Activated CD4-positive, alpha-beta T cell treated with anti-CD3 and anti-CD28 coated beads, Interleukin-2, amount 10 ng/mL, durations not matched to agents 7 days and 5 days (primary cell): ENCODE measurements at regions of chr22 and their contacts with region 1.

Region 1: GRCh38 chr22:37817705-37818408 is 5.3 kb upstream of the GALR3 start:
- DNase-seq: peak; percentile 78
- H3K4me3 Mint-ChIP-seq: no peak overlapping the region
- H3K27ac Mint-ChIP-seq: no peak overlapping the region
- H3K4me1 Mint-ChIP-seq: peaks cover 17% of the 10 kb centered on the region
- H3K27me3 Mint-ChIP-seq: peaks cover 31% of the 10 kb centered on the region

Region 2: DNA sequence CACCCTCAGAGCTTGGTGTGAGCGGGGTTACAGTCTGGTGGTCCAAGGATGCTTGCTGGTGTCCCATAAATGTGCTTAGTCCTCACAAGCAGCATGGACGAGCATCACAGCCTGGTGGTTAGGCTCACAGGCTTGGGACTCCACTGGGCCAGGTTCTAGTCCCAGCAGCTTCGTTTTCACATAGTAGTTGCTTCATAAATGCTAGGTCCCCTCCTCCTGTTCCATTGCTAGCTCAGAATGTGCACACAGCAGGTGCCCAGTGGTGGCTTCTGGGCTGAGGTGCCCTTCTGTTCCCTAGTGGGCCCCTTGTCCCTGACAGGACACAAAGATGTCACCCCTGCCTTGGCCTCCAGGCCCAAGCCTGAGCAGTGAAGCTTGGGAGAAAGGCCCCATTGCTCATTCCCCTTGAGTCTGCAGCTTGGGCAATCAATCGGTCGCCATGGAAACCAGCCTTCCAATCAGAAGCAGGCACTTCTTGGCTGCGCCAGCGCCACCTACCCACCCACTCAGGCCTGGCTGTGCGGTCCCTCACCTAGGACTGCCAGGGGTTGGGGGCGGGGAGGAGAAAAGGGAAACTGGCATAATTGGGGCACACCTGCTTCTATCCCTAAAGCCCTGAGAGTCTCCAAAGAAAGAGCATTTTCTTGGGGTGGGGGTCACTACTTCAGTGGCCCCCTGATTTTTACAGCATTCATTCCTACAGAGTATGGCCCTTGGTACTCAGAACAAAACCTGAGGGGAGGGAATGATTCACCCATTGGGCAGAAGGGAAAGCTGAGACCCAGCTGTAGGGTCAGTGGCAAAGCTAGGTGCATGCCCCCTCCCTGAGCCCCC is 487.4 kb before region 1 on chr22:
- CTCF ChIA-PET with region 1: no interaction called
- POLR2A ChIA-PET with region 1: no interaction called
- DNase-seq: peak; percentile 50
- H3K4me3 Mint-ChIP-seq: no peak overlapping the region
- H3K27ac Mint-ChIP-seq: no peak overlapping the region
- H3K4me1 Mint-ChIP-seq: peaks cover 2% of the 10 kb centered on the region
- H3K27me3 Mint-ChIP-seq: peaks cover 65% of the 10 kb centered on the region

Region 3: DNA sequence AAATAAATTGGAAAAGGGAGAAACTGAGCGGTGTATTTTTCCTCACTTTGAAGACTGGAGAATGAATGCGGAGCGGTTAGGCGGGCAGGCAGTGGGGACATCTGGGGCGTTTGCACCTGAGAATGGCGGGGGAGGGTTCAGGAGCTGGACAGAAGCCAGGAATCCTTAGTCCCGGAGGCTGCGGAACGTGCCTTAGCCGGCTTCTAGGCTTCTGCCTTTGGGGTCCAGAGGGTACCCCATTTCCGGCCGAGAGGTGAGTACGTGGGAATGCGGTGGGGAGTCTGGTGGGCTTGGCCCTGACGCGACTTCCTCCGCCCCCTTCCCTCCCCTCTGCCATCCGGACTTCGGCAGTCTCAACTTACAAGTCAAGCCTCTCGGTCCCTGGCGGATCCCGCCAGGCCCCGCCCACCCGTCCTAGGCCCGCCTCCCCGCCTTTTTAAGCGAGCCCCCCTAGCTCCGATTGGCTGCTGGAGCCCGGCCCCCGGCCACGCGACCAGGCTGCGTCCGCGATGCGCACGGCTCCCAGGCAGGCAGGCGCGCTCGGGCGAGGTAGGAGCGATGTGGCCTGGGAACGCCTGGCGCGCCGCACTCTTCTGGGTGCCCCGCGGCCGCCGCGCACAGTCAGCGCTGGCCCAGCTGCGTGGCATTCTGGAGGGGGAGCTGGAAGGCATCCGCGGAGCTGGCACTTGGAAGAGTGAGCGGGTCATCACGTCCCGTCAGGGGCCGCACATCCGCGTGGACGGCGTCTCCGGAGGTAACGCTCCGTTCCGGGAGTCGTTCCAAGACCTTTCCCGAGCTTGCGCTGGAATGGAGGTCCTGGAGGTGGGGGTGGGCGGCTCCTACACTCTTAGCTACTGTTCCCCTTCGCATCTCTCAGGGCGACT is 10.2 kb before region 1 on chr22 and contains the start of gene GCAT:
- CTCF ChIA-PET with region 1: interaction called, 59 read pairs
- POLR2A ChIA-PET with region 1: no interaction called
- DNase-seq: peak; percentile 93
- H3K4me3 Mint-ChIP-seq: peak within 1 kb of the TSS; percentile 75
- H3K27ac Mint-ChIP-seq: peak within 1 kb of the TSS; percentile 19
- H3K4me1 Mint-ChIP-seq: peaks cover 45% of the 10 kb centered on the region
- H3K27me3 Mint-ChIP-seq: peaks cover 40% of the 10 kb centered on the region
- total RNA-seq, gene GCAT: 10.4 to 12.0 TPM

Region 4: DNA sequence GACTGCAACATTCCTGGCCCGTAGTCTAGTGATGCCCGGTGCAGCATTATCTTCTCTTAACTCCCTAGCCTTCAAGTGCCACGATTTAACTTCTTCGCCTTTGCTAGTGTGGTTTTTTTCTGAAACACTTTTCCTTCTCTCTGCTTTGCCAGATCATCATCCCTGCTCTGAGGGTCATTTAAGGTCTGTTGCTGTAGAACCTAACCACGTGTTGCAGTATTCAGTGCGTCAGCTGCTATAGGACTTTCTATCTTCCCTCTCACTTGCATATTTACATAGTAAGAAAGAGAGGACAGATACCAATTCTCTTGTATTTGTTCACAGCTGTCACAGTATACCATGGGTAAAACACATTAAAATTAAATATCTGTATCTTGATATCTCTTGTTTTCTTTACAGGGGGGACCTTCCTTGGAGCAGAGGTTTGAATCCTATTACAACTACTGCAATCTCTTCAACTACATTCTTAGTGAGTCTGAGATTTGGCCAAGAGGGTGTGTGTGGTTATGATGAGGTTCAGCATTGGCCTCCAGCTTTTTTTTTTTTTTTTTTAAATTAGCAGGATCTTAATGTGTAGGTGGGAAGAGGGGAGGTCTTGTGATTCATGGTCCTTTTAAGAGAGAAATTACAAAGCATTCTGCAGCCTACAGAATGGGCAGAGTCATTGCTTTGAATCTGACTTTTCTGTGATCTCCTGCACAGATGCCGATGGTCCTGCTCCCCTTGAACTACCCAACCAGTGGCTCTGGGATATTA is 44.9 kb after region 1 on chr22:
- CTCF ChIA-PET with region 1: interaction called, 43 read pairs
- POLR2A ChIA-PET with region 1: interaction called, 3 read pairs
- DNase-seq: no peak
- H3K4me3 Mint-ChIP-seq: no peak overlapping the region
- H3K27ac Mint-ChIP-seq: no peak overlapping the region
- H3K4me1 Mint-ChIP-seq: peaks cover 6% of the 10 kb centered on the region
- H3K27me3 Mint-ChIP-seq: no peaks in the 10 kb centered on the region

Region 5: DNA sequence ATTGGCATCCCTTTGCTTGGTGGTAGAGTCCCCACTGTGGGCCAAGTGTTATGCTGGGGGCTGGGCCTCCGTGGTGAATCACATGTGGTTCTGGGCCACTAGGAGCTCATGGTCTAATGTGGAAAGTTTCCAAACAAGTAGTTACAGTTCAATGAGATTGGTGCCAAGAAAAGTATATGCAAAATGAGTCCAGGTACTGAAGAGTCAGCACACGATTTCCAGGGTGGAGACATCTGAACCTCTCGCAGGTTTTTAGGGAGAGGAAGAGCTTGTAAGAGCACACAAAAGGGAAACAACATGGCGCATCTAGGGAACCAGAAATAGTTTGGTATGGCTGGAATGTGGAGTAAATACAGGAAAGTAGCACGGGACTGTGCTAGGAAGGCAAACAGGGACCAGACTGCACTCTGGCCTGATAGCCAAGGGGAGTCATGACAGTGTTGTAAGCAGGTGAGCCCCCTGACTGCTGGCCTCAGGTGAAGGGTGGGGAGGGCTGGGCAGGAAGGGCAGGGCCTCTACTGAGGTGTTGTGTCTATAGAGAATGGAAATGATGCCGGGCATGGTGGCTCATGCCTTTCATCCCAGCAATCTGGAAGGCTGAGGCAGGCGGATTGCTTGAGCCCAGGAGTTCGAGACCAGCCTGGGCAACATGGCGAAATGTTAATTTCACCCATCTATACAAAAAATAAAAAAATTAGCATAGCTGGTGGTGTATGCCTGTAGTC is 148.2 kb after region 1 on chr22:
- CTCF ChIA-PET with region 1: interaction called, 13 read pairs
- POLR2A ChIA-PET with region 1: no interaction called
- DNase-seq: no peak
- H3K4me3 Mint-ChIP-seq: no peak overlapping the region
- H3K27ac Mint-ChIP-seq: no peak overlapping the region
- H3K4me1 Mint-ChIP-seq: peaks cover 2% of the 10 kb centered on the region
- H3K27me3 Mint-ChIP-seq: no peaks in the 10 kb centered on the region